Transverse colon (tissue), 4 donors: ENCODE measurements at regions of chr1 and their contacts with region 1.

Region 1: GRCh38 chr1:78839704-78840277 is 166.7 kb downstream of the ADGRL4 start:
- DNase-seq: no peak
- H3K4me3 ChIP-seq: no peak overlapping the region
- H3K27ac ChIP-seq: no peak overlapping the region
- H3K4me1 ChIP-seq: peaks cover 0 to 20% (median 0%) of the 10 kb centered on the region in 4 donors
- H3K27me3 ChIP-seq: no peaks in the 10 kb centered on the region
- CTCF ChIP-seq: peak; percentile 38 to 55 (median 52)
- EP300 ChIP-seq: no peak
- POLR2A ChIP-seq: no peak

Region 2: GRCh38 chr1:78536427-78536826 is 303.4 kb before region 1 on chr1:
- in situ Hi-C with region 1: no loop called
- intact Hi-C with region 1: no loop called
- DNase-seq: no peak
- H3K4me3 ChIP-seq: no peak overlapping the region
- H3K27ac ChIP-seq: no peak overlapping the region
- H3K4me1 ChIP-seq: no peaks in the 10 kb centered on the region
- H3K27me3 ChIP-seq: no peaks in the 10 kb centered on the region
- CTCF ChIP-seq: no peak
- EP300 ChIP-seq: no peak
- POLR2A ChIP-seq: no peak

Region 3: GRCh38 chr1:78716186-78716585 is 123.6 kb before region 1 on chr1:
- in situ Hi-C with region 1: no loop called
- intact Hi-C with region 1: no loop called
- DNase-seq: no peak
- H3K4me3 ChIP-seq: no peak overlapping the region
- H3K27ac ChIP-seq: no peak overlapping the region
- H3K4me1 ChIP-seq: no peaks in the 10 kb centered on the region
- H3K27me3 ChIP-seq: no peaks in the 10 kb centered on the region
- CTCF ChIP-seq: no peak
- EP300 ChIP-seq: no peak
- POLR2A ChIP-seq: no peak

Region 4: DNA sequence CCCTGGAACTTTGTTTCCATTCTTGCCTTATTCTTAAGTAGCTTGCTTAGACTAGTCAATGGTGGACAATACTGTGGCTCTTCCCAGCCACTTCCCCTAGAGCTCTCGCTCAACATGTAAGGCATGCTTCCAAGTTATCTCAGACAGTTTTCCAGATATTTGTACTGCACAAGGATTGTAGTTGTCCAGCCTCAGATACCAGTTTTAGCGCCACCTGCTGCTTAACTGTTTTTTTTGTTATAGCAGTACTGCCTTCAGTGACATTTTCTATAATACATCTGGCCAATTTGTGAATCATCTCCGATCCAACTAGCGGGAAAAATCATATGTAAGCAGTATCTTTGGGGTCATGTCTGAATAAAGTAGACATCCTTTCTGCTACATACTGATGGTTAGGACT is 513.4 kb after region 1 on chr1:
- in situ Hi-C with region 1: loop called in 2 of 4 experiments (anchors 25 kb)
- intact Hi-C with region 1: no loop called
- DNase-seq: no peak
- H3K4me3 ChIP-seq: no peak overlapping the region
- H3K27ac ChIP-seq: no peak overlapping the region
- H3K4me1 ChIP-seq: no peaks in the 10 kb centered on the region
- H3K27me3 ChIP-seq: no peaks in the 10 kb centered on the region
- CTCF ChIP-seq: peak in 4 of 5 experiments; percentile 13 to 34 (median 24)
- EP300 ChIP-seq: no peak
- POLR2A ChIP-seq: no peak